ENCODE measurements at regions of chr20 and their contacts with region 1.

Region 1: DNA sequence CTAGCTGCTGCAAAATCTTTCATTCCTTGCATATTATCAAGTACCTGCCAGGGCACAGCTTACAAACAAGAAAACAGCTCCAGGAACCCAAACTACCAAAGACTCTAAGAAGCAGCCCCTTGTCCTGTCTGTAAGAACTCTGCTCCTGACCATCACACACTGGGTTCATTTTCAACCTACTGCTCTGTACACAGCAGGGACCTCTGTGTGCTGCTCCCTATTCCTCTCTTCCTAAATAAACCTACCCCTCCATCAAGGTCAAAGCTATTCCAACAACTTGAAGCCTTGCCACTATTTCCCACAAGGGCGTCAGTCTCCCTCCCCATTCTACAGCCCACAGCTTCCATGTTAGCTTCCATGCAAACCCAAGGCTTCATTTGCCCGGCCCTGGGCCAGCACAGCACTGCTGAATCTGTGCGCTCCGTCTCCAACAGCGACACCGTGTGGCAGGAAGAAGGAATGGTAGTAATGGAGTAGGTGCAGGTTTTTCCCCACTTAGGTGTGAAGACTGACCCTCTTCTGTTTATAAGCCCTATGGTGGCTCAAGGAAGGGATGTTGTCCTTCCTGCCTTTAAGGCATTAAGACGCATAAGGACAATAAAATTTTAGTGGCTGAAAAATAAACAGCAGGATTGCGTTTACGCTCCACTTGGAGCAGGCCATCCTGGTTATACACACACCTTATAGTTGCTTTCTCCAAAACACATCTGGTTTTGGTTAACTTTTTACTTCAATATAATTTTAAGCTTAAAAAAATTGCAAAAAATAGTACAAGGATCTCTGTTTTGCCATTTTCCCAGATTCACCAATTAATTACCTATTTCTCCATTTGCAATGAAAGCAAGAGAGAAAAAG is 115.2 kb upstream of the NXT1 start:
- DNase-seq: peak; percentile 91
- H3K4me3 ChIP-seq: no peak overlapping the region
- H3K27ac ChIP-seq: no peak overlapping the region
- H3K4me1 ChIP-seq: peaks cover 0 to 4% (median 0%) of the 10 kb centered on the region in 4 donors
- H3K27me3 ChIP-seq: no peaks in the 10 kb centered on the region
- CTCF ChIP-seq: peak; percentile 54 to 68 (median 62)
- EP300 ChIP-seq: no peak
- POLR2A ChIP-seq: no peak

Region 2: DNA sequence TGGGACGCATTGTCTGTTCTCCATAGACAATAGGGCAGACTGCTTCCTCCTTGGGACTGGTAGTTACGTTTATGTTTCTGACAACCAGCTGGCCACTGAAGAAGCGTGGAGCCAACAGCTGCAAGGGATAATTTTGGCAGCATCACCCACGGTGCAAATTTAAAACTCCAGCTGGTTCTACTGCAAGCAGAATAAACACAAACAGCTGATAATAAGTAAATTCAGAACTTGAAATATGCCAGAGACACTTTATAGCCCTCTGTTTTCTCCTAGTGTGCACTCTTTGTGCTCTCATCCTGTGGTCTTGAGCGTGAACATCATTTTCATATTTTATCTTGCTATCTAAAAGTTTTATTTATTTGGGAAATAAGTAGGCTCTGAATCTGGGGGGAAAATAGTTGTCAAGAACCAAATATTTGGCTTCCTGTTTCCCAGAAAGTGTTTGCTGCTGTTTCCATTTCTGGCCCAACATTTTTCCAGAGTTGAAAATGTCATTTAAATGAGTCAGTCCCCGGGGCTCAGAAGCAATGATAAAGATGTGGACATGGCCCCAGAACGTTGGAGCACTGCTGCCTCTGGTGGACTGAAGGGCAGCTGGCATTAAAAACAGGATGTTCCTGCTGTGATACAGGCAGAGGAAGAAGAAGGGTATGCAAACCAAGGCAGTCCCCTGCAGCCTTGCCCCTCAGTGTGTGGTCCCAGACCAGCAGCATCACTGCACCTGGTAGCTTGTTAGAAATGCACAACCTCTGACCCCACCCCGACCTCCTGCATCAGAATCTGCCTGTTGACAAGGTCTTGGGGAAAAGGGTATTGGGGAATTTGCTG is 173.5 kb before region 1 on chr20:
- intact Hi-C with region 1: loop called (anchors 5 kb)
- DNase-seq: no peak
- H3K4me3 ChIP-seq: no peak overlapping the region
- H3K27ac ChIP-seq: peak overlapping the region; percentile 19 to 65 (median 54)
- H3K4me1 ChIP-seq: peaks cover 30 to 46% (median 38%) of the 10 kb centered on the region in 4 donors
- H3K27me3 ChIP-seq: no peaks in the 10 kb centered on the region
- CTCF ChIP-seq: peak in 1 of 3 experiments; percentile 51
- EP300 ChIP-seq: no peak
- POLR2A ChIP-seq: no peak

Measured in esophagus muscularis mucosa (tissue), 4 donors.